Activated CD4-positive, alpha-beta memory T cell treated with anti-CD3 and anti-CD28 coated beads, Interleukin-2, amount 10 ng/mL, durations not matched to agents 7 days and 5 days (primary cell): ENCODE measurements at regions of chr5 and their contacts with region 1.

Region 1: DNA sequence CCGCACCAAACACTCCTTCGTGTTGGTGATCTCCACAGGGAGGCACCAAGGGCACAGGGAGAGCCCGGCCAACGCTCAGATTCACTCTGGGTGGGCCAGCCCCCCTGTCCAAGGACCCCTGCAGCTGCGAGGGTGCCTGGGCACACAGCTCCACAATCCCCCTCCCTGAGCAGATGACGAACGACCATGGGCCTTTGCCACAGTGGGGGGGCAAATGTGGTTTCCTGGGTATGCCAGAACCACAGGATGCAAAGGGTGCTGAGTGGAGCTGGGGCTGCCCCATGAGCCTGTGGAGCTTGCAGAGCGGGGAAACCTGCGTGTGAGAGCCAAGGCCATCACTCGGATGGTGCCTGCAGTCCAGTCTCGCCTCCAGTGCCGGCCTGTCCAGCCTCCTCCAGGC is 31.0 kb downstream of the LPCAT1 start:
- DNase-seq: peak; percentile 23
- H3K4me3 Mint-ChIP-seq: no peak overlapping the region
- H3K27ac Mint-ChIP-seq: peak overlapping the region; percentile 10
- H3K4me1 Mint-ChIP-seq: peaks cover 75% of the 10 kb centered on the region
- H3K27me3 Mint-ChIP-seq: no peaks in the 10 kb centered on the region

Region 2: DNA sequence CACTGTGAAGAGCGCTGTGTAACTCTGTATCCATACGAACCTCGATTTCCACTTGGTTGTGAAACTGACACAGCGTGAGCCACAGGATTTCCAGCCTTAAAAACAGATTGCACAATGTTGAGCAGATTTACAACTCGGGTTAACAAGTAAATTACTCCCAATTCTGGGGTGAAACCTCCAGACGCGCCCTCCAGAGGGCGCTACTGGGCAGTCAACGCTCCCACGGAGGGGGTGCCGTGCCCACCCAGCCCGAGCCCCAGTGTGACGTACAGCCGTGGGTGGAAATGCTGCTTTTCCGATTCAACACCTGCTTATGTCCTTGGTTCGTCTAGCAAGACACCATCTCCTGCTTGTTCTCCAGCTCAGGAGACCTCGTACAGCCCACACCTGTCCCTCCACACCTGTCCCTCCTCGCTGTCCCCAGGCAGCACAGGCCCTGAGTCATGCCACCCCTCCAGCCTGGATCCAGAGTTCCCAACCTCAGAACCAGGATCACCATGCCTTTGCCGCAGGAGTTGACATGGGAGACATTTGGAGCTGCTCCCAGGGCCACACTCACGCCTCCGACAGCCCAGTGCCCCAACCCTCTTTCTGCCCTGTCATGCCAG is 13.1 kb before region 1 on chr5:
- CTCF ChIA-PET with region 1: interaction called, 11 read pairs
- POLR2A ChIA-PET with region 1: no interaction called
- DNase-seq: peak; percentile 41
- H3K4me3 Mint-ChIP-seq: no peak overlapping the region
- H3K27ac Mint-ChIP-seq: no peak overlapping the region
- H3K4me1 Mint-ChIP-seq: peaks cover 6% of the 10 kb centered on the region
- H3K27me3 Mint-ChIP-seq: no peaks in the 10 kb centered on the region